Ovary (tissue), 10 donors: ENCODE measurements at regions of chr4 and their contacts with region 1.

Region 1: DNA sequence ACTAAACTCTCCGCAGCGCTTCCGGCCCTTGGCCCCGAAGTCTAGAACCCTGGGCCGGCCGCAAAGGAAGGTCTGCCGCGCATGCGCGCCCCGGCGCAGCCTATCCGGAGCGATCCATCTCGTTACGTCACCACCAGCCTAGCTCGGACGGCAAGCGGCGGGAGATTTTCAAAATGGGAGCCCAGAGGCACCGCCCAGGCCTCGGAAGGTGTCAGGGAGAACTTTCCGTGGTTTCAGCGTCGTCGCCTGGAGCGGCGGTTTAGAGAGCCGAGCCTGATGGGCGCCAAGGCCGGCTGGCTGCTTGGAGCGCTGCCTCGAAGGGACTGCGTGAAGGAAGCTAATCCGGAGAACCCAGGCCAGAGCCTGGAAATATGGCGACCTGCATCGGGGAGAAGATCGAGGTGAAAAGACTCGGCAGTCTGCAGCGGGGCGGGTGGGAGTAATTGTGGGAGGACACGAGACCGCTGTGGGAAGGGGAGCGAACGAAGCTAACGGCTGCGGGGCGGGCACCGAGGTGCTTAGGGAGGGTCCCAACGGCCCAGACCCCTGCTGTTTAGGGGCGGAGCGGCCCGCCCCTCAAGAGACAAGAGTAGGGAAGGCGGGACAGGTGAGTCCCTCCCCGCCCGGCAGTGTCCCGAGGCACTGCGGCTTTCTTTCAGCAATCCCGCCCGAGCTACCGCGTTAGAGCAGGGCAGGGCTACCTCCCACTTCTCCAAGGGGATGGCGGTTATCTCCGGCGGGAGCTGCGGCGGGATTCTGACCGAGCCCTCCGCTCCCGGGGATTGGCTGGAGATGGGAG is at the start of gene PLK4:
- DNase-seq: peak; percentile 94 to 96 (median 95)
- H3K4me3 ChIP-seq: peak within 1 kb of the TSS; percentile 60
- H3K27ac ChIP-seq: peak within 1 kb of the TSS in 1 of 2 donors; percentile 65
- H3K4me1 ChIP-seq: peaks cover 3% of the 10 kb centered on the region
- H3K27me3 ChIP-seq: no peaks in the 10 kb centered on the region
- CTCF ChIP-seq: no peak
- EP300 ChIP-seq: no peak
- POLR2A ChIP-seq: no peak
- total RNA-seq, gene PLK4: 0.48 to 4.4 (median 1.7) TPM

Region 2: GRCh38 chr4:127959794-127960193 is 78.8 kb after region 1 on chr4:
- intact Hi-C with region 1: loop called in 1 of 4 experiments (anchors 5 kb)
- DNase-seq: no peak
- H3K4me3 ChIP-seq: no peak overlapping the region
- H3K27ac ChIP-seq: no peak overlapping the region
- H3K4me1 ChIP-seq: no peaks in the 10 kb centered on the region
- H3K27me3 ChIP-seq: no peaks in the 10 kb centered on the region
- CTCF ChIP-seq: no peak
- EP300 ChIP-seq: no peak
- POLR2A ChIP-seq: no peak